Heart right ventricle (tissue), 16 donors: ENCODE measurements at regions of chr17 and their contacts with region 1.

Region 1: DNA sequence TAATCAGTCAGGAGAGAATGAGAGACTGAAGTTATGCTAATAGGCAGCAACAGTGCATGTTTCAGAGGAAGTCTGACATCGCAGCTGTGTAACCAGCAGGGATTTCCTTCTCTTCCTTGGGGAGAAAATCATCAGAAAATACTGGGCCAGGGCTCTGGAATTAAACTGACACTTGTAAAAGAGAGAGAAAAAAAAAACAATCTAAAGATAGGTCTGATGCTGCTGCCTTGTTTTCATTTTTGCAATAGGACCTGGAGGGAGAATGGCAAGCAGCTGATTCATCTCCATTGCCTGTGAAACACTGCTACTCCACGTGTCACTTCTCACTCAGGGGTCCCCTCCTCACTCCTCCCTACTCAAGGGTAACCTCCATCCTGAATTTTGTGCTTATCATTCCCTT is 17.7 kb upstream of the CORO6 start:
- DNase-seq: peak in 1 of 2 donors; percentile 23
- ATAC-seq: peak in 6 of 8 donors; percentile 21 to 48 (median 38)
- H3K4me3 ChIP-seq: peak overlapping the region in 1 of 10 donors; percentile 9
- H3K27ac ChIP-seq: peak overlapping the region; percentile 37 to 86 (median 74)
- H3K4me1 ChIP-seq: peaks cover 36 to 70% (median 66%) of the 10 kb centered on the region in 9 donors
- H3K27me3 ChIP-seq: no peaks in the 10 kb centered on the region
- CTCF ChIP-seq: no peak

Region 2: GRCh38 chr17:29407856-29408255 is 232.6 kb before region 1 on chr17:
- intact Hi-C with region 1: no loop called
- DNase-seq: no peak
- ATAC-seq: no peak
- H3K4me3 ChIP-seq: no peak overlapping the region
- H3K27ac ChIP-seq: no peak overlapping the region
- H3K4me1 ChIP-seq: peaks cover 0 to 34% (median 21%) of the 10 kb centered on the region in 9 donors
- H3K27me3 ChIP-seq: no peaks in the 10 kb centered on the region
- CTCF ChIP-seq: no peak

Region 3: GRCh38 chr17:29747660-29748059 is 107.2 kb after region 1 on chr17:
- intact Hi-C with region 1: loop called in 1 of 10 experiments (anchors 5 kb)
- DNase-seq: no peak
- ATAC-seq: no peak
- H3K4me3 ChIP-seq: no peak overlapping the region
- H3K27ac ChIP-seq: peak overlapping the region in 9 of 10 donors; percentile 43 to 84 (median 64)
- H3K4me1 ChIP-seq: peaks cover 3 to 65% (median 49%) of the 10 kb centered on the region in 9 donors
- H3K27me3 ChIP-seq: no peaks in the 10 kb centered on the region
- CTCF ChIP-seq: no peak